A549 (cell line): ENCODE measurements at regions of chr19 and their contacts with region 1.

Region 1: GRCh38 chr19:51765086-51765485 is 4.1 kb downstream of the FPR2 start:
- DNase-seq: no peak
- ATAC-seq: no peak
- H3K4me3 ChIP-seq: no peak overlapping the region
- H3K27ac ChIP-seq: no peak overlapping the region
- H3K4me1 ChIP-seq: no peaks in the 10 kb centered on the region
- CTCF ChIP-seq: no peak
- EP300 ChIP-seq: no peak
- POLR2A ChIP-seq: no peak
- RAD21 ChIP-seq: no peak

Region 2: GRCh38 chr19:51777570-51778462 is 12.7 kb after region 1 on chr19:
- CTCF ChIA-PET with region 1: interaction called, 10 read pairs
- POLR2A ChIA-PET with region 1: no interaction called
- DNase-seq: peak; percentile 20 to 85
- ATAC-seq: peak; percentile 83 to 91
- H3K4me3 ChIP-seq: no peak overlapping the region
- H3K27ac ChIP-seq: no peak overlapping the region
- H3K4me1 ChIP-seq: no peaks in the 10 kb centered on the region
- CTCF ChIP-seq: peak; percentile 70
- EP300 ChIP-seq: no peak
- POLR2A ChIP-seq: no peak
- RAD21 ChIP-seq: peak; percentile 77 to 81